Heart left ventricle (tissue), 16 donors: ENCODE measurements at regions of chr4 and their contacts with region 1.

Region 1: GRCh38 chr4:25312496-25313200 is at the start of gene ZCCHC4:
- DNase-seq: peak; percentile 89 to 95 (median 91)
- ATAC-seq: peak; percentile 97 to 99 (median 98)
- H3K4me3 ChIP-seq: peak within 1 kb of the TSS; percentile 42 to 87 (median 78)
- H3K27ac ChIP-seq: peak within 1 kb of the TSS in 11 of 12 donors; percentile 47 to 81 (median 69)
- H3K4me1 ChIP-seq: peaks cover 0 to 17% (median 9%) of the 10 kb centered on the region in 12 donors
- H3K27me3 ChIP-seq: no peaks in the 10 kb centered on the region
- CTCF ChIP-seq: peak; percentile 95 to 100 (median 99)
- POLR2A ChIP-seq: peak in 1 of 2 donors; percentile 54
- total RNA-seq, gene ZCCHC4: 5.2 to 9.6 (median 7.7) TPM

Region 2: GRCh38 chr4:24584175-24584850 is 728.3 kb before region 1 on chr4 and contains the start of gene DHX15:
- intact Hi-C with region 1: loop called in 2 of 10 experiments (anchors 5 kb)
- DNase-seq: peak; percentile 96 to 97 (median 97)
- ATAC-seq: peak; percentile 93 to 98 (median 96)
- H3K4me3 ChIP-seq: peak within 1 kb of the TSS; percentile 73 to 100 (median 97)
- H3K27ac ChIP-seq: peak within 1 kb of the TSS; percentile 90 to 99 (median 98)
- H3K4me1 ChIP-seq: peaks cover 8 to 47% (median 31%) of the 10 kb centered on the region in 12 donors
- H3K27me3 ChIP-seq: no peaks in the 10 kb centered on the region
- CTCF ChIP-seq: no peak
- POLR2A ChIP-seq: no peak
- total RNA-seq, gene DHX15: 45.4 to 67.8 (median 58.0) TPM

Region 3: GRCh38 chr4:25159884-25160713 is 152.5 kb before region 1 on chr4 and contains the start of gene SEPSECS:
- intact Hi-C with region 1: loop called in 4 of 10 experiments (anchors 1 to 10 kb)
- DNase-seq: peak; percentile 98 to 99 (median 98)
- ATAC-seq: peak; percentile 91 to 96 (median 93)
- H3K4me3 ChIP-seq: peak within 1 kb of the TSS; percentile 59 to 96 (median 82)
- H3K27ac ChIP-seq: peak within 1 kb of the TSS; percentile 83 to 98 (median 92)
- H3K4me1 ChIP-seq: peaks cover 0 to 37% (median 15%) of the 10 kb centered on the region in 12 donors
- H3K27me3 ChIP-seq: no peaks in the 10 kb centered on the region
- CTCF ChIP-seq: peak in 1 of 12 donors; percentile 23
- POLR2A ChIP-seq: no peak
- total RNA-seq, gene SEPSECS: 3.2 to 7.6 (median 6.2) TPM

Region 4: DNA sequence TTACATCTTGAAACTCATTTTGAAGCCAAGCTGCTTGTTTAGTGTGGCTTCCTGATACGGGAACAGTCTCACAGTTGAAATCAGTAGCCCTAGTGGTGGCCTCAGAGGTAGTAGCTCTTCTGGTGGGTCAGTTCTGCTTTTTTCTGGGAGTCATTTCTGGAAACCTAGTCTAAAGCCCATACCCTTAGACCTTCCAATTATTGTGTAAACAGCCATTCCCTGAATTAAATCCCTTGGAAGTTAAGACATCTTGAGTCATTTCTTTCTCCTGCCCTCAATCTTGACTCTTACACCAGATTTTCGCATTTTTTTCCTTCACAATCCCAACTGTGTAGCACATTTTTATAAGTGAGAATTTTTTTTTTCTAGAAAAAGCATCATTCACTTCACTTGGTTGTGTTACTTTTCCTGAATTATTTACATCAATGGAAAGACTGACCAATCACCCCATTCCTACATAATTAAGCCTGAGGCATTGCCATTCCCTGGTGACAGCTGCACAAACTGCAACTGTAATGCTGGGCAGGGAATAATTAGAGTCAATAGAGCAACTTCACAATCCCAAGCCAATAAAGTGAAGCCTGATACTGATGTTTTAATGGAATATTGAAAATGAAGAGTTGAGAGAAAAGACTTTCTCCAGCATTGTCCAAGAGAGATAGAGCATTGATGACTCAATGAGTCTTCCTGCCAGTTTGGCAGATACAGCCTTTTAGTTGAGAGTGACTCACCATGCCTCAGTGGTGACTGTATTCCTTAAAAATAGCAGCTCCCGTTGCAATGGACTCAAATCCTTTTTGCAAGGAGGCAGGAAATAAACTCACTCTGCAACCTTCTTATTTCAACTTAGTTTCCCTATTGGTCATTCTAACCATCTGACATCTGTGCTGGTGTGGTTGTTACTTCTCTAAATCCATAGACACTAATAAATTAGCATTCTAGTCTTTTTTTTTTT is 139.4 kb before region 1 on chr4:
- intact Hi-C with region 1: loop called in 3 of 10 experiments (anchors 5 to 10 kb)
- DNase-seq: peak in 4 of 5 donors; percentile 37 to 74 (median 56)
- ATAC-seq: peak; percentile 92 to 99 (median 97)
- H3K4me3 ChIP-seq: no peak overlapping the region
- H3K27ac ChIP-seq: peak overlapping the region in 11 of 12 donors; percentile 4 to 89 (median 72)
- H3K4me1 ChIP-seq: peaks cover 0 to 38% (median 16%) of the 10 kb centered on the region in 12 donors
- H3K27me3 ChIP-seq: no peaks in the 10 kb centered on the region
- CTCF ChIP-seq: no peak
- POLR2A ChIP-seq: no peak

Region 5: GRCh38 chr4:25376754-25377571 is 64.3 kb after region 1 on chr4 and contains the start of gene ANAPC4:
- intact Hi-C with region 1: loop called in 2 of 10 experiments (anchors 2 to 5 kb)
- DNase-seq: peak; percentile 95 to 98 (median 97)
- ATAC-seq: peak; percentile 95 to 98 (median 98)
- H3K4me3 ChIP-seq: peak within 1 kb of the TSS; percentile 50 to 97 (median 94)
- H3K27ac ChIP-seq: peak within 1 kb of the TSS in 11 of 12 donors; percentile 54 to 86 (median 75)
- H3K4me1 ChIP-seq: peaks cover 0 to 32% (median 10%) of the 10 kb centered on the region in 12 donors
- H3K27me3 ChIP-seq: no peaks in the 10 kb centered on the region
- CTCF ChIP-seq: peak in 5 of 12 donors; percentile 10 to 24 (median 18)
- POLR2A ChIP-seq: peak in 1 of 2 donors; percentile 65
- total RNA-seq, gene ANAPC4: 6.7 to 15.5 (median 12.5) TPM